Calu3 (cell line): ENCODE measurements at regions of chr9 and their contacts with region 1.

Region 1: GRCh38 chr9:87375397-87376073 is 122.1 kb upstream of the DAPK1 start:
- DNase-seq: peak; percentile 6
- H3K4me3 Mint-ChIP-seq: no peak overlapping the region
- H3K27ac Mint-ChIP-seq: no peak overlapping the region
- H3K4me1 Mint-ChIP-seq: peaks cover 51% of the 10 kb centered on the region
- H3K27me3 Mint-ChIP-seq: no peaks in the 10 kb centered on the region
- CTCF ChIP-seq: no peak

Region 2: DNA sequence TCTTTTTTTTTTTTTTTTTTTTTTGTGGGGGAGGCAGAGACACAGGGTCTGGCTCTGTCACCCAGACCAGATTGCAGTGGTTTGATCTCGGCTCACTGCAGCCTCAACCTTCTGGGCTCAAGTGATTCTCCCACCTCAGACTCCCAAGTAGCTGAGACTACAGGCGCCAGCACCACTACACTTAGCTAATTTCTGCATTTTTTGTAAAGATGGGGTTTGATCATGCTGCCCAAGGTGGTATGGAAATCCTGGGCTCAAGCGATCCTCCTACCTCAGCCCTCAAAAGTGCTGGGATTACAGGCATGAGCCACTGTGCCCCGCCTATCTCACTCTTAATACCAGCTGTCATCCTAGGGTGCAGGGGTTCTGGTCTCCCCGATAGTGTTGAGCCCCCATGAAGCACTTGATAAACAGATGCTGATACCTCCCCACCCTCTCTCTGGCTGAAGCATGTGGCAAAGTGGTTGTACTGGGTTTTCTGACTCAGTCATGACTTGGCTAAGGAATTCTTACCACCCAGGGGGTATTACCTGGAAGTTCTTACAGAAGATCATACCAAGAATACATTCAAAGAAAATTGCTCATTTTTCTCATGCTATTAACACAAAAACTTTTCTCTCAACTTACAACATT is 11.9 kb after region 1 on chr9:
- CTCF ChIA-PET with region 1: interaction called, 10 read pairs
- intact Hi-C with region 1: no loop called
- DNase-seq: no peak
- H3K4me3 Mint-ChIP-seq: no peak overlapping the region
- H3K27ac Mint-ChIP-seq: no peak overlapping the region
- H3K4me1 Mint-ChIP-seq: peaks cover 44% of the 10 kb centered on the region
- H3K27me3 Mint-ChIP-seq: no peaks in the 10 kb centered on the region
- CTCF ChIP-seq: no peak

Region 3: GRCh38 chr9:87405677-87406542 is 30.4 kb after region 1 on chr9:
- CTCF ChIA-PET with region 1: no interaction called
- intact Hi-C with region 1: loop called (anchors 1 kb)
- DNase-seq: peak; percentile 41
- H3K4me3 Mint-ChIP-seq: peak overlapping the region; percentile 19
- H3K27ac Mint-ChIP-seq: peak overlapping the region; percentile 98
- H3K4me1 Mint-ChIP-seq: peaks cover 47% of the 10 kb centered on the region
- H3K27me3 Mint-ChIP-seq: no peaks in the 10 kb centered on the region
- CTCF ChIP-seq: no peak

Region 4: GRCh38 chr9:87428646-87429045 is 53.1 kb after region 1 on chr9:
- CTCF ChIA-PET with region 1: interaction called, 4 read pairs
- intact Hi-C with region 1: loop called (anchors 2 kb)
- DNase-seq: peak; percentile 53
- H3K4me3 Mint-ChIP-seq: no peak overlapping the region
- H3K27ac Mint-ChIP-seq: peak overlapping the region; percentile 64
- H3K4me1 Mint-ChIP-seq: peaks cover 18% of the 10 kb centered on the region
- H3K27me3 Mint-ChIP-seq: no peaks in the 10 kb centered on the region
- CTCF ChIP-seq: no peak